Activated CD8-positive, alpha-beta T cell treated with anti-CD3 and anti-CD28 coated beads, Interleukin-2, amount 10 ng/mL, durations not matched to agents 7 days and 5 days (primary cell): ENCODE measurements at regions of chr15 and their contacts with region 1.

Region 1: DNA sequence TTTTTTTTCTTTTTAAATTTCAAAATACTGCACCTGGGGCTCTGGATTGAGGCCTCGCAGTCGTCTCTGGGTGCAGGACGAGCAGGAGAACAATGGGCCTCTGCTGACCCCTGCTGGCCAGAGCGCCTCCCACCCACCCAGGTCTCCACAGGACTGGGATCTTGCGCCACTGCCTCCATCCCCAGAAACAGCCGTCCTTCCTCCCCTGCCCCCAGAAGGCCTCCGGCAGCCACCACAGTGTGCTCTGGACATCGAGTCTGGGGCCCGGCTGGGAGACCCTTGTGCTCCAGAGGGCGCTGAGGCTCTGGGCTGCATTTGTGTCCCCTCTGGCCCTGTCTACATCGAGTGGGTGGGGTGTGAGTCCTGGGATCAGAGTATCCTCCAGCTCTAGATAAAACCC is 6.6 kb upstream of the ACSBG1 start:
- DNase-seq: peak; percentile 89
- ATAC-seq: peak; percentile 93
- H3K4me3 Mint-ChIP-seq: no peak overlapping the region
- H3K27ac Mint-ChIP-seq: no peak overlapping the region
- H3K4me1 Mint-ChIP-seq: peaks cover 6% of the 10 kb centered on the region
- H3K27me3 Mint-ChIP-seq: peaks cover 2% of the 10 kb centered on the region

Region 2: GRCh38 chr15:77959432-77959879 is 281.6 kb before region 1 on chr15:
- CTCF ChIA-PET with region 1: interaction called, 22 read pairs
- POLR2A ChIA-PET with region 1: no interaction called
- DNase-seq: peak; percentile 84
- ATAC-seq: peak; percentile 99
- H3K4me3 Mint-ChIP-seq: peak overlapping the region; percentile 39
- H3K27ac Mint-ChIP-seq: no peak overlapping the region
- H3K4me1 Mint-ChIP-seq: peaks cover 19% of the 10 kb centered on the region
- H3K27me3 Mint-ChIP-seq: peaks cover 27% of the 10 kb centered on the region

Region 3: DNA sequence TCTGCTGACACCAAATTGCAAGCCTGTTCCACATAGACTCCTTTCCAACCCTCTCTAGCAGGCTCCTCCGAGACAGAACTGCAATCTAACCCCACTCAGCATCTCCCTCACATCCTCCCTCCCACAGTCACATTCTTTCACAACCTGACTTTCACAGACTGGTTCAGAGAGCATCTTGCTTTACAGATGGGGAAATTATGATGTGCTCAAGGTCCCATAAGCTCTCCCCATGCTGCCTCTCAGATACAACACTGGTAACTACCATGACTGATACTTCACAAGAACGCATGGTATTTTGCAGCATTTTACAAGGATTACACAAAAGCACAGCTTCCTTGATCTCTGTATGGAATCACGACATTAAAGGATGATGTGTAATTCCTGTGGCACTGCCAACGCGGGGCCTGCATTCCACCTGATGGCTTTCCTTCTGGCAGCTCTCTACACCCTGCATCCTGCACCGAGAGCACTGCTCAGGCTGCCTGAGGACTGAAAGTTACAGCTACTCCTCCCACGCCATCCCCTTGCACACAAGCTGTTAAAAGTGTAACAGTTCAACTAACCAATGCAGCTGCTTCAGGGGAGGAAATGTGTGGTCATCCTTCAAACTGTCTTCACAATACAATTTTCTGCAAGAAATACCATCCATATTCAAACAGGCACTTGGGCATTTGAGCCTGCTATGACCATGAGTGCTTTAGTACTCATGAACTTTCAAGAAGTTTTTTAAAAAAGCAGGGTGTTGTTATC is 191.1 kb before region 1 on chr15:
- CTCF ChIA-PET with region 1: no interaction called
- POLR2A ChIA-PET with region 1: no interaction called
- DNase-seq: peak; percentile 80
- ATAC-seq: peak; percentile 80
- H3K4me3 Mint-ChIP-seq: peak overlapping the region; percentile 60
- H3K27ac Mint-ChIP-seq: peak overlapping the region; percentile 94
- H3K4me1 Mint-ChIP-seq: peaks cover 94% of the 10 kb centered on the region
- H3K27me3 Mint-ChIP-seq: no peaks in the 10 kb centered on the region

Region 4: DNA sequence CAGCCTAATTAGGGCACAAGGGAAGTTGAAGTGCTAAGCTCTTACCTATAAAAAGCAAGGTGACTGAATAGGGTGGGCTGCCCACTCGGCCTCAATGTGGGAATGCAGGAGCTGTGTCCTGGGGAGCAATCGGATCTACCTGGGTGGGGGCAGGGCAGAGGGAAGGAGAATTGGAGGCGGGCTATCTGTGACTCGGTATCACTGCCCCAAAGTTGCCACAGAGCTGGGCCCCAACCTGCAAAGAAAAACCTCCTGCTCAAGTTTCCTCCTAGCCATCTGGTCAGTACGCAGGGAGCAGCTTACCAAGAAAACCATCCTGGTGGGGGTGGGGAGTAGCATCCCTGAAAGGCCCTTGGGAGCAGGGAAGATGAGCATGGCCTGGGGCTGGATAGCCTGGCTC is 120.5 kb before region 1 on chr15:
- CTCF ChIA-PET with region 1: interaction called, 29 read pairs
- POLR2A ChIA-PET with region 1: no interaction called
- DNase-seq: no peak
- ATAC-seq: no peak
- H3K4me3 Mint-ChIP-seq: no peak overlapping the region
- H3K27ac Mint-ChIP-seq: no peak overlapping the region
- H3K4me1 Mint-ChIP-seq: no peaks in the 10 kb centered on the region
- H3K27me3 Mint-ChIP-seq: no peaks in the 10 kb centered on the region

Region 5: GRCh38 chr15:78177447-78177873 is 63.5 kb before region 1 on chr15:
- CTCF ChIA-PET with region 1: interaction called, 25 read pairs
- POLR2A ChIA-PET with region 1: no interaction called
- DNase-seq: peak; percentile 56
- ATAC-seq: no peak
- H3K4me3 Mint-ChIP-seq: no peak overlapping the region
- H3K27ac Mint-ChIP-seq: no peak overlapping the region
- H3K4me1 Mint-ChIP-seq: peaks cover 27% of the 10 kb centered on the region
- H3K27me3 Mint-ChIP-seq: peaks cover 3% of the 10 kb centered on the region

Region 6: DNA sequence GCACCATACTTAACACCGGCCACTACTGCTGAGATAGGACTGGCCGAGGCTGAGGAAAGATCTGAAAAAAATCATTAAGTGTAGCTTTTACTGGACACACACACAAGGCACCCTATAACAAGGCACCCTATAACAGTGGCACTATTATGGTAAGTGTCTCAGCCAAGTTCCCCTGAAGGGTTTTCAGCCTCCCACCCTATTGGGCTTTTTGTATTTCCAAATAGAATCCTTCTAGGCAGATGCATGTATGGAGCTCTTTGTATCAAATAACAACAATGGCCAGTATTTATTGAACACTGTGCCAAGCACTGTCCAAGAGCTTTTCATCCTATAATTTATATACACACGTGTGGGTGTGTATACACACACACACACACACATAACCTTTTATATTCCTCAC is 16.7 kb after region 1 on chr15:
- CTCF ChIA-PET with region 1: interaction called, 10 read pairs
- POLR2A ChIA-PET with region 1: no interaction called
- DNase-seq: no peak
- ATAC-seq: no peak
- H3K4me3 Mint-ChIP-seq: no peak overlapping the region
- H3K27ac Mint-ChIP-seq: no peak overlapping the region
- H3K4me1 Mint-ChIP-seq: no peaks in the 10 kb centered on the region
- H3K27me3 Mint-ChIP-seq: peaks cover 6% of the 10 kb centered on the region